ENCODE measurements at regions of chr10 and their contacts with region 1.

Region 1: GRCh38 chr10:101141616-101142532 is 10.8 kb downstream of the TLX1 start:
- DNase-seq: peak; percentile 89
- ATAC-seq: peak; percentile 93
- H3K4me3 Mint-ChIP-seq: no peak overlapping the region
- H3K27ac Mint-ChIP-seq: no peak overlapping the region
- H3K4me1 Mint-ChIP-seq: peaks cover 14% of the 10 kb centered on the region
- H3K27me3 Mint-ChIP-seq: peaks cover 81% of the 10 kb centered on the region
- CTCF ChIP-seq: peak; percentile 99

Region 2: GRCh38 chr10:101018600-101019439 is 123.1 kb before region 1 on chr10:
- CTCF ChIA-PET with region 1: interaction called, 20 read pairs
- POLR2A ChIA-PET with region 1: no interaction called
- intact Hi-C with region 1: no loop called
- DNase-seq: peak; percentile 93
- ATAC-seq: peak; percentile 87
- H3K4me3 Mint-ChIP-seq: no peak overlapping the region
- H3K27ac Mint-ChIP-seq: no peak overlapping the region
- H3K4me1 Mint-ChIP-seq: peaks cover 20% of the 10 kb centered on the region
- H3K27me3 Mint-ChIP-seq: peaks cover 42% of the 10 kb centered on the region
- CTCF ChIP-seq: peak; percentile 91

Region 3: GRCh38 chr10:101060036-101060950 is 81.6 kb before region 1 on chr10:
- CTCF ChIA-PET with region 1: interaction called, 62 read pairs
- POLR2A ChIA-PET with region 1: interaction called, 5 read pairs
- intact Hi-C with region 1: no loop called
- DNase-seq: peak; percentile 96
- ATAC-seq: peak; percentile 66
- H3K4me3 Mint-ChIP-seq: peak overlapping the region; percentile 82
- H3K27ac Mint-ChIP-seq: peak overlapping the region; percentile 96
- H3K4me1 Mint-ChIP-seq: peaks cover 18% of the 10 kb centered on the region
- H3K27me3 Mint-ChIP-seq: peaks cover 19% of the 10 kb centered on the region
- CTCF ChIP-seq: peak; percentile 97

Region 4: DNA sequence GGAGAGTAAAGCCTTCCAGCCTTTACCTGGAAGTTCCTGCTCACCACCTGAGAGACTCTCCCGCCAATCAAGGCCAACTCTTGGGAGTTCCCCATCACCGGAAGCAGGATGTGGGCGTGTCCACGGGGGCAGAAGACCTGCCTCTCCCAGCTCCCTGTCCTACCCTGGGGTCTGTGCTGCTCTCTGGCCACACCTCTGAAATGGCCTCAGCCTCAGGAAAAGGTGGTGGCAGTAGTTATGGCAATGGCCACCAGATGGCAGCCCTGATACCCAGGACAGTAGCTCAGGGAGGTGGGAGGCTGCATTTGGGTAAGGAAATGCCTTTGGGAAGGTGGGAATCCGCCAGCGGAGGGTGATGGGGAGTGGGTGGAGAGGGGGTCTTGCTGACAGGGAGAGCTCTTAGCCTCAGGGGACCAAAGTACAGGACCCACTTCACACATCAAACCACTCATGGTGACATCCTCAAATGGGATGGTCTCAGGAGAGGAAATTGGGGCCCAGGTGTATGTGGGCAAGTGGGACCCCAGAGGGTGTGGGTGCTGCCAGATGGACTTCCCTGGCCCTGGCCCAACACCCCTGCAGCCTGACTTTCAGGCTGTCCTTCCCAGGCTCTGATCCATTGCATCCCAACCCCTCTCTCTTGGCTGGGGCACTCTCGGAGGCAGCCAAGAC is 46.2 kb before region 1 on chr10:
- CTCF ChIA-PET with region 1: interaction called, 507 read pairs
- POLR2A ChIA-PET with region 1: interaction called, 3 read pairs
- intact Hi-C with region 1: loop called (anchors 1 kb)
- DNase-seq: peak; percentile 89
- ATAC-seq: peak; percentile 100
- H3K4me3 Mint-ChIP-seq: no peak overlapping the region
- H3K27ac Mint-ChIP-seq: no peak overlapping the region
- H3K4me1 Mint-ChIP-seq: peaks cover 3% of the 10 kb centered on the region
- H3K27me3 Mint-ChIP-seq: peaks cover 32% of the 10 kb centered on the region
- CTCF ChIP-seq: peak; percentile 71

Region 5: DNA sequence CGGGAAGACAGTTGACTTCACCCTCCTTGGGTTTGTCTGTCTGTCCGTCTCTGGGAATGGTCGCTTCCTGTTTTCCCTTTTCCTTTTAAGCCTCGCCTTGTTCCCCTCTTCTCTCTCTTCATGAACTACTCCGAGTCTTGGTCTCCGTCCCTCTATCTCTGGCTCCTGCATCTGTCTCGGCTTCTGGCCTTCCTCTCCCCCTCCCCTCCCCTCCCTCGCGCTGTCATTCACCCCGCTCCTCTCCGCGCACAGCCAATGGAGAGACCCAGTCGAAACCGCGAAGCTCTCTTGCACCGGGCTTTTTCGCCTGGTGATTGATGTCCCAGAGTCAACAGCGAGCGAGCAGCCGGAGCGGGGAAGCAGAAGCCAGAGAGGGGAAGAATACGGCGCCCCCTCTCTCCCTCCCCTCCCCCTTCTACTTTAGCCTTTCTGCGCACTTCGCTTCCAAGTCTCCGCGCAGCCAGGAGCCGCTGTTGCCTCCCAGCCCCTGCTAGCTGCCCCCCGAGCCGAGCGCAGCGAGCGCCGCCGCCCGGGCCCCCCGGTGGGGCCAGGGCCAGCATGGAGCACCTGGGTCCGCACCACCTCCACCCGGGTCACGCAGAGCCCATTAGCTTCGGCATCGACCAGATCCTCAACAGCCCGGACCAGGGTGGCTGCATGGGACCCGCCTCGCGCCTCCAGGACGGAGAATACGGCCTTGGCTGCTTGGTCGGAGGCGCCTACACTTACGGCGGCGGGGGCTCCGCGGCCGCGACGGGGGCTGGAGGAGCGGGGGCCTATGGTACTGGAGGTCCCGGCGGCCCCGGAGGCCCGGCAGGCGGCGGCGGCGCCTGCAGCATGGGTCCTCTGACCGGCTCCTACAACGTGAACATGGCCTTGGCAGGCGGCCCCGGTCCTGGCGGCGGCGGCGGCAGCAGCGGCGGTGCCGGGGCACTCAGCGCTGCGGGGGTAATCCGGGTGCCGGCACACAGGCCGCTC is 10.6 kb before region 1 on chr10 and contains the start of gene TLX1:
- CTCF ChIA-PET with region 1: interaction called, 29 read pairs
- POLR2A ChIA-PET with region 1: interaction called, 3 read pairs
- intact Hi-C with region 1: no loop called
- DNase-seq: no peak
- ATAC-seq: no peak
- H3K4me3 Mint-ChIP-seq: peak within 1 kb of the TSS; percentile 6
- H3K27ac Mint-ChIP-seq: no peak within 1 kb of the TSS
- H3K4me1 Mint-ChIP-seq: peaks cover 28% of the 10 kb centered on the region
- H3K27me3 Mint-ChIP-seq: peaks cover 78% of the 10 kb centered on the region
- CTCF ChIP-seq: no peak
- total RNA-seq, gene TLX1: not detected

Region 6: DNA sequence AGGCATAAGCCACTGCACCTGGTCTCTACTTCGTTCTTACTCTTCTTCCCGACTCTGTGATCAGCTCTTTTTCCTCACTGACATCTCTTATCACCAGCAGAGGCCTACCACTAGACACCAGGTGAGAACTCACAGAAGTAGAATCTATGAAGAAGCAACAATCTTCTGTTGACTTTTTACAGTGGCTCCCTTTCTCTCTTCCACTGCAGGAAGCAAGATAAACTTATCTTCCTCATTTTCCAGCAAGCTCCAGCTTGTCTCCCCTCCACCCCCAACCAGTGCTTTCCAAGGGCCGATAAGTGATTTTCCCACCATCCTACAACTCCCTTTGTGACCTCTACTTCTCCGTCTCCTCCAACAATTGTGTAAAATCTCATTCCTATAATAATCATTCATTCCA is 34.7 kb after region 1 on chr10:
- CTCF ChIA-PET with region 1: interaction called, 15 read pairs
- POLR2A ChIA-PET with region 1: no interaction called
- intact Hi-C with region 1: no loop called
- DNase-seq: no peak
- ATAC-seq: no peak
- H3K4me3 Mint-ChIP-seq: no peak overlapping the region
- H3K27ac Mint-ChIP-seq: no peak overlapping the region
- H3K4me1 Mint-ChIP-seq: no peaks in the 10 kb centered on the region
- H3K27me3 Mint-ChIP-seq: peaks cover 35% of the 10 kb centered on the region
- CTCF ChIP-seq: no peak

Region 7: DNA sequence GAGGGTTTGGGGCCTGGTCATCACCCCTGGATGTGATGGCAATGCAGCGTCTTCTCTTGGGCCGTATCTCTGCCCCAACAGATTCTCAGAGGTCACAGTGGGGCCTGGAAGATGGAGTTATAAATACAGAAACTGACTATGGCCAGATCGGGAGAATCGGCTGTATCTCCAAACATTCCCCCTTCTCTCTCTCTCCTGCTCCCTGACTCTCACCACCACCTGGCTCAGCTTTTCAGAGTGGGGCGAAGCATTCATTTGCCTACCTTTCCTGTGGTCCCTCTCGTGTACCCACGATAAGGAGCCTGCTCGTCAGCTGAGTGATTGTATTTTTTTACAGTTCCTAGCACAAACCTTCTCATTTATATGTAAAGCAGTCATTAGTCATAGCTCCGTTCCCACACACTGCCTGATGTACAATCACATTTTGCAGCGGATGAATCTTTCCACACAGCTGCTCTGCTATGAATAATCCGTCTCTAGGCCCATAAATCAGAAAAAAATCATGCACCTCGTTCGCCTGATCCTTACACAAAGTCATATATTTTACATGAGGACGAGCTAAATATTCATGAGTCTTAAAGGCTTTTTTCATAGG is 188.9 kb after region 1 on chr10:
- CTCF ChIA-PET with region 1: no interaction called
- POLR2A ChIA-PET with region 1: no interaction called
- intact Hi-C with region 1: no loop called
- DNase-seq: no peak
- ATAC-seq: no peak
- H3K4me3 Mint-ChIP-seq: no peak overlapping the region
- H3K27ac Mint-ChIP-seq: no peak overlapping the region
- H3K4me1 Mint-ChIP-seq: no peaks in the 10 kb centered on the region
- H3K27me3 Mint-ChIP-seq: peaks cover 9% of the 10 kb centered on the region
- CTCF ChIP-seq: no peak

Measured in activated CD8-positive, alpha-beta T cell treated with anti-CD3 and anti-CD28 coated beads for 36 hours (primary cell).